ENCODE measurements at regions of chr10 and their contacts with region 1.

Region 1: DNA sequence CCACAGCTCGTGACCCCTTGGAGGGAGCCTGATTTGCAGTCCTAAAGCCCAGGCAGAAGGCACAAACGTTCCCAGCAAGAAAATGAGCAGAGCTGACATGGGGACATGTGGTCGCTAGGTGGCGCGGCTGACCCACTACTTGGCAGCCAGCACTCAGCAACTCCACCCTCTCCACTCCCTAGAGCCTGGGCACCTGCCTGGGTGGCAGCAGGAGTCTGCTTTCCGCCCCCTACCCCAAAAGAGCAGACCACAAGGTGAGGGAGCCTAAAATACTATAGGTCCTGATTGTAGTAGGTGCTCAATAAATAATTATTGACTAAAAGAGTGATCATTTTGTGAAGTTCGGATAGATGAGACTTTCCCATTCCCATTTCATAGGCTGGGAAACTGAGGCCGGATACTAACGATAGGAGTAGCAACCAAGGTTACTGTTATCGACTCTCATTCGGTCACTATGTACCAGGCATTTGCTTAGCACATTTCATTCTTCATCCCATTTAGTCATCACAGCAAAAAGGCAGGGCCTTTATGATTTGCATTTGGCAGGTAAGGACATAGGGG is 57.4 kb downstream of the NEUROG3 start:
- DNase-seq: peak; percentile 88
- ATAC-seq: peak; percentile 89
- H3K4me3 Mint-ChIP-seq: no peak overlapping the region
- H3K27ac Mint-ChIP-seq: no peak overlapping the region
- H3K4me1 Mint-ChIP-seq: peaks cover 19% of the 10 kb centered on the region
- H3K27me3 Mint-ChIP-seq: no peaks in the 10 kb centered on the region
- CTCF ChIP-seq: peak; percentile 94

Region 2: DNA sequence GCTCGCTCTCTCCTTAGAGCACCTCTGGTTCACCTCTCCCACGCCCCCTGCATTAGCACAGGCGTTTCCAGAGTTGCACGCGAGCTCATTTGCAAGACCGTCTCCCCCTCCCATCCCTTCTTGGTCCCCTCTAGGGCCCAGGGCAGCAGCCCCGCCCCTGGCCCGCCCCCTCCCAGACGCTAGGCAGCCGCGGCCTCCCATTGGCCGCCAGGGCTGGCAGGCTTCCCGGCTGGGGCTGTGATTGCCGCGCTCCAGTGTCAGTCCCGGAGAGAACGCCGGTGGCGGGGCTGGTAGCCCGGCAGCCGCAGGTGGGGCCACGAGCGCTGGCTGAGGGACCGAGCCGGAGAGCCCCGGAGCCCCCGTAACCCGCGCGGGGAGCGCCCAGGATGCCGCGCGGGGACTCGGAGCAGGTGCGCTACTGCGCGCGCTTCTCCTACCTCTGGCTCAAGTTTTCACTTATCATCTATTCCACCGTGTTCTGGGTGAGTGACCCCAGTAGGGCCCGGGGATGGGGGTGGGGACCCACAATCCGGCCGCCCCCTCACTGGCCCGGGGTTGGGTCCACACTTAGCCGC is 64.5 kb before region 1 on chr10 and contains the start of gene TSPAN15:
- CTCF ChIA-PET with region 1: interaction called, 23 read pairs
- POLR2A ChIA-PET with region 1: no interaction called
- DNase-seq: peak; percentile 95
- ATAC-seq: peak; percentile 92
- H3K4me3 Mint-ChIP-seq: peak within 1 kb of the TSS; percentile 77
- H3K27ac Mint-ChIP-seq: no peak within 1 kb of the TSS
- H3K4me1 Mint-ChIP-seq: peaks cover 19% of the 10 kb centered on the region
- H3K27me3 Mint-ChIP-seq: peaks cover 70% of the 10 kb centered on the region
- CTCF ChIP-seq: no peak
- total RNA-seq, gene TSPAN15: 8.3 to 10.4 TPM (median 10.1 TPM) in 3 replicates

Region 3: DNA sequence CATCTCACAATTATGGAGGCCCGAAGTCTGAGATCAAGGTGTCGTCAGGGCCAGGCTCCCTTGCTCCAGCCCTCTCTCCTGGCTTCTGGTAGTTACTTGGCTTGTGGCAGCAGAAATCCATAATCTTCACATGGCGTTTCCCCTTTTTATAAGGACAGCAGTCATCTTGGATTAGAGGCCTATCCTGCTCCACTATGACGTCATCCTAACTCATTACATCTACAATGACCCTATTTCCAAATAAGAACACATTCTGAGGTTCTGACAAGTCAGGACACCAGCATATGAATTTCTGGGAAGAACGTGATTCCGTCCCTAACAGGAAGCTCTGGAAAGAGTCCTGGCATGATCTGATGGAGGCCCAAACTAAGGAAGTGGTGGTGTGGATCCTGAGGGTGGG is 21.7 kb after region 1 on chr10:
- CTCF ChIA-PET with region 1: no interaction called
- POLR2A ChIA-PET with region 1: no interaction called
- DNase-seq: no peak
- ATAC-seq: no peak
- H3K4me3 Mint-ChIP-seq: no peak overlapping the region
- H3K27ac Mint-ChIP-seq: no peak overlapping the region
- H3K4me1 Mint-ChIP-seq: no peaks in the 10 kb centered on the region
- H3K27me3 Mint-ChIP-seq: peaks cover 29% of the 10 kb centered on the region
- CTCF ChIP-seq: no peak

Region 4: GRCh38 chr10:69567920-69568319 is 52.1 kb after region 1 on chr10:
- CTCF ChIA-PET with region 1: interaction called, 53 read pairs
- POLR2A ChIA-PET with region 1: no interaction called
- DNase-seq: peak; percentile 83
- ATAC-seq: peak; percentile 13
- H3K4me3 Mint-ChIP-seq: peak overlapping the region; percentile 88
- H3K27ac Mint-ChIP-seq: no peak overlapping the region
- H3K4me1 Mint-ChIP-seq: peaks cover 40% of the 10 kb centered on the region
- H3K27me3 Mint-ChIP-seq: peaks cover 97% of the 10 kb centered on the region
- CTCF ChIP-seq: no peak

Region 5: GRCh38 chr10:69639291-69640195 is 123.8 kb after region 1 on chr10:
- CTCF ChIA-PET with region 1: interaction called, 511 read pairs
- POLR2A ChIA-PET with region 1: interaction called, 19 read pairs
- DNase-seq: peak; percentile 81
- ATAC-seq: peak; percentile 76
- H3K4me3 Mint-ChIP-seq: no peak overlapping the region
- H3K27ac Mint-ChIP-seq: 0 out of 2 replicates have a peak overlapping the region, but pooled peaks have one; percentile 4
- H3K4me1 Mint-ChIP-seq: peaks cover 13% of the 10 kb centered on the region
- H3K27me3 Mint-ChIP-seq: no peaks in the 10 kb centered on the region; the same call in 1 of the 2 replicates
- CTCF ChIP-seq: peak; percentile 89

Region 6: DNA sequence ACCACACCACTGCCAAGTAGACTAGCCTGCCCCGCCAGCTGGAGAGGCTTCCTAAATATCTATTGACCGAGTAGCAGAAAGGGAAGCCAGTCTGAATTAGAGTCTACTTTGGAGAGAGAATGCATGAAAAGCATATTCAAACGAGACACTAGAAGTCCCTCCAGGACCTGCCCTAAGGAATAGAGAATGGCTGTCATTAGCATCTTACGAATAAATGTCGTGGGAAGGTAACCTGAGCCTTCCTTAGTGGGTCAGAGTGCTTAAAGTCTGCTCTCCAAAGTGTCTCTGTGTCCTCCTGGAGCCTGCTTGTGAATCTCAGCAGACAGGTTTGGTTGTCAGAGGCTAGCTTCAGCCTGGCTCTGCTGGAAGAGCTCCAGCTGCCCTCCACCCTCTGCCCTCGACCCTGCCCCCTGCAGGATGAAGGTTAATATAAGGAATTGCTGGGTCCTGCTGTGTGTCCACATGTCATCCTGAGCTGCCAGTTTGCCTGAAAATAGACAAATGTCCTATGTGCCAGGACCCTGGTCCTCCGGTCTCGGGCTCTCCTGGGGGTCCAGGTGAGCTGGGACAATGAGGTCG is 147.7 kb after region 1 on chr10:
- CTCF ChIA-PET with region 1: interaction called, 48 read pairs
- POLR2A ChIA-PET with region 1: no interaction called
- DNase-seq: peak; percentile 63
- ATAC-seq: peak; percentile 88
- H3K4me3 Mint-ChIP-seq: no peak overlapping the region
- H3K27ac Mint-ChIP-seq: no peak overlapping the region
- H3K4me1 Mint-ChIP-seq: peaks cover 27% of the 10 kb centered on the region
- H3K27me3 Mint-ChIP-seq: peaks cover 9% of the 10 kb centered on the region
- CTCF ChIP-seq: no peak

Region 7: GRCh38 chr10:69901628-69902505 is 386.1 kb after region 1 on chr10:
- CTCF ChIA-PET with region 1: no interaction called
- POLR2A ChIA-PET with region 1: no interaction called
- DNase-seq: peak; percentile 77
- ATAC-seq: peak; percentile 86
- H3K4me3 Mint-ChIP-seq: no peak overlapping the region
- H3K27ac Mint-ChIP-seq: peak overlapping the region; percentile 86
- H3K4me1 Mint-ChIP-seq: peaks cover 35% of the 10 kb centered on the region
- H3K27me3 Mint-ChIP-seq: peaks cover 3% of the 10 kb centered on the region
- CTCF ChIP-seq: peak; percentile 61; the same call in 1 of the 2 replicates

Measured in WTC11 (cell line).